CD4-positive, alpha-beta T cell (primary cell): ENCODE measurements at regions of chr16 and their contacts with region 1.

Region 1: GRCh38 chr16:2474877-2475412 is at the start of gene TBC1D24:
- DNase-seq: peak; percentile 50 to 87 (median 70)
- ATAC-seq: peak; percentile 48
- H3K4me3 ChIP-seq: peak within 1 kb of the TSS; percentile 60
- H3K4me3 Mint-ChIP-seq: peak within 1 kb of the TSS; percentile 84
- H3K27ac ChIP-seq: no peak within 1 kb of the TSS
- H3K27ac Mint-ChIP-seq: no peak within 1 kb of the TSS
- H3K4me1 ChIP-seq: peaks cover 37% of the 10 kb centered on the region
- H3K4me1 Mint-ChIP-seq: peaks cover 13% of the 10 kb centered on the region
- H3K27me3 ChIP-seq: peaks cover 26 to 34% of the 10 kb centered on the region in 2 experiments
- H3K27me3 Mint-ChIP-seq: peaks cover 16% of the 10 kb centered on the region
- CTCF ChIP-seq: no peak
- total RNA-seq, gene TBC1D24: 1.2 to 2.1 TPM

Region 2: DNA sequence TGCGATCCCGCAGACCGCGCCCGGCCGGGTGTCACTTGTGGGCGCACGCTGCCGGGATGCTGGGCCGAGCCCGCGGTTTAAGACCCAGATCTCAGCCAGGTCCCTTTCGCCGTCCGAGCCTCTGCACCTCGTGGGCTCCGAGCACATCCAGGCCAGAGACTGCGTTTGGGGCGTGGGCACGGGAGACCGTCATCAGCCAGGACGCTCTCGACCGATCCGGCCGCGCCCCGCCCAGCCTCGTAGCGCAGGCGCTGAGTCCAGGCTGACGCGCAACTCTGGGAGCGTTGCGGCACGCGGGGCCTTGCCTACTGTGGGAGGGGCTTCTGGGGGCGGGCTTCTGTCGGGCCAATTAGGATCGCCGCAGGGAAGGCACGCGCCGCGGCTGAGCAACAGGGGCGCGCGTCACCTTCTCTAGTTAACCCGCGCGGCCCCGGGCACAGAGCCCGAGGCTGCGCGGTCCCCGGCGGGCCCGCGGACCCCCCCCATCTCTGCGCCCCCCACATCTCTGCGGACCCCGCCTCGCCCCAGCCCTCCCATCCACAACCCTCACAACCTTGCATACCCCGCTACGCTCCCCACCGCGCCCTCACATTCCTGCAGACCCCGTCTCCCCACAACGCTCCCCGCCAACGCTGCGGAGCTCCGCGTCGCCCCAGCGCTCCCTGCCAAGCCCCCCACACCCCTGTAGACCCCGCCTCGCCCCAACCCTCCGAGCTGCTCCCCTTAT is 57.0 kb after region 1 on chr16:
- CTCF ChIA-PET with region 1: no interaction called
- POLR2A ChIA-PET with region 1: interaction called, 5 read pairs
- intact Hi-C with region 1: loop called in 1 of 2 experiments (anchors 2 kb)
- DNase-seq: peak; percentile 92 to 99 (median 97)
- ATAC-seq: peak; percentile 86
- H3K4me3 ChIP-seq: peak overlapping the region; percentile 94
- H3K4me3 Mint-ChIP-seq: peak overlapping the region; percentile 95
- H3K27ac ChIP-seq: peak overlapping the region; percentile 94 to 95
- H3K27ac Mint-ChIP-seq: peak overlapping the region; percentile 98
- H3K4me1 ChIP-seq: peaks cover 28% of the 10 kb centered on the region
- H3K4me1 Mint-ChIP-seq: peaks cover 22% of the 10 kb centered on the region
- H3K27me3 ChIP-seq: no peaks in the 10 kb centered on the region
- H3K27me3 Mint-ChIP-seq: peaks cover 8% of the 10 kb centered on the region
- CTCF ChIP-seq: no peak